IMR-90 (cell line): ENCODE measurements at regions of chr6 and their contacts with region 1.

Region 1: DNA sequence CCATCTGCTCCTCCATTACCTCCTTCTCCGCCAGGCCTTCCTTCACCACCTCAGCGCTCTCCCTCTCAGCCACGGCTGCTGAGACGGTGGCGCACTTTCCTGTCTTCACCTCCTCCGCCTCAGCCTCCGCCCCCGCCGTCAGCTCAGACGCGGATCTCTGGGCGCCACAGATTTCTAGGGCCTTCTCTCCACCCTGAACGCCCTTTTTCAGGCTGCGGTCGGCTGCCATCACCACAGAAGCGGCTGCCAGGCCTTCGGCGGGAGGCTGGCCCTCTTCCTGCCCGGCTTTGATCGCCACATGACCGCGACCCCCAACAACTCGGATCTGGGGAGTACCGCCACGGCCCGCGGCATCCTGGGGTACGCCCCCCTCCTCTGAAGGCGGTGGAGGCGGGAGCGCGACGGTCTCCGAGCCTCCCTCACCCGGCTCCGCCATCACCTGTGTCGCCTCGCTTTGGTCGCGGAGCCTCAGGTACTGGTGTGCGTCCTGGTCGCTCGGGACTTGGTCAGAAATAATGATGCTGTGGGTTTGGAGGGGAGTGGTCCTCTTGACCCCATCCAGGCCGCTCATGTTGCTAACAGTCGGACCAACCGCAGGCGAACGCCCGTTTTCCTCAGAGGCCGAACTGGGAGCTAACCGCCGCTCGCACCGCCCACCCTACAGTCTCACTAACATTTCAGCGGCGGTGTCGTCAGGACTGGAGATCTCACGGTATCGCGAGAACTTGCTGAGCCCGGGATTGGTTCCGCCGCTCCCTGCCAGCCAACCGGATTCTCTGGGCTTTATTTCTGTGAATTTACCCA is at the start of gene TSPYL1:
- DNase-seq: peak; percentile 97
- ATAC-seq: peak; percentile 96
- H3K4me3 ChIP-seq: peak within 1 kb of the TSS; percentile 87
- H3K27ac ChIP-seq: peak within 1 kb of the TSS; percentile 93
- H3K4me1 ChIP-seq: peaks cover 6% of the 10 kb centered on the region
- H3K27me3 ChIP-seq: no peaks in the 10 kb centered on the region
- CTCF ChIP-seq: 0 out of 2 replicates have a peak, but pooled peaks have one; percentile 13
- POLR2A ChIP-seq: peak; percentile 94
- RAD21 ChIP-seq: no peak
- total RNA-seq, gene TSPYL1: 111 and 121 TPM in 2 replicates

Region 2: DNA sequence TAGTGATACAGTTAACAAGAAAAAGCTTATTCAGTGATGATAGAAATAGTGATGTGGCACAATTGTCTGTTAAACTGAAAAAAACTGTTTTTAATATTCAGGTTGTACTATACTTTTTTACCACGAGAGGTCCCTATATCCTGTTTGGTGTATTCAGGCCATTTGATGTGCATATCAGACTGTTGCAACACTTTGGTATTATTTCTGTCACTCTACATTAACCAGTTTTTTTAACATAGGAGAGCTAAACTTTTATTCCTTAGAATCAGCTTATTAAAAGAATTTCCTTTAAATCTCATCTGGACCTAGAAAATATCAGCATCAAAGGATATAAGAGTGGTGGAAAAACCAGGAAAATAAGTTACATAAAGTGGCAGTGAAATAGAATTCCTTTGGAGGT is 62.4 kb before region 1 on chr6:
- CTCF ChIA-PET with region 1: no interaction called
- POLR2A ChIA-PET with region 1: no interaction called
- dilution Hi-C with region 1: no loop called
- in situ Hi-C with region 1: no loop called
- intact Hi-C with region 1: no loop called
- DNase-seq: peak; percentile 52
- ATAC-seq: peak; percentile 67
- H3K4me3 ChIP-seq: no peak overlapping the region
- H3K27ac ChIP-seq: no peak overlapping the region
- H3K4me1 ChIP-seq: peaks cover 6% of the 10 kb centered on the region
- H3K27me3 ChIP-seq: no peaks in the 10 kb centered on the region
- CTCF ChIP-seq: peak; percentile 59
- POLR2A ChIP-seq: no peak
- RAD21 ChIP-seq: peak; percentile 54

Region 3: DNA sequence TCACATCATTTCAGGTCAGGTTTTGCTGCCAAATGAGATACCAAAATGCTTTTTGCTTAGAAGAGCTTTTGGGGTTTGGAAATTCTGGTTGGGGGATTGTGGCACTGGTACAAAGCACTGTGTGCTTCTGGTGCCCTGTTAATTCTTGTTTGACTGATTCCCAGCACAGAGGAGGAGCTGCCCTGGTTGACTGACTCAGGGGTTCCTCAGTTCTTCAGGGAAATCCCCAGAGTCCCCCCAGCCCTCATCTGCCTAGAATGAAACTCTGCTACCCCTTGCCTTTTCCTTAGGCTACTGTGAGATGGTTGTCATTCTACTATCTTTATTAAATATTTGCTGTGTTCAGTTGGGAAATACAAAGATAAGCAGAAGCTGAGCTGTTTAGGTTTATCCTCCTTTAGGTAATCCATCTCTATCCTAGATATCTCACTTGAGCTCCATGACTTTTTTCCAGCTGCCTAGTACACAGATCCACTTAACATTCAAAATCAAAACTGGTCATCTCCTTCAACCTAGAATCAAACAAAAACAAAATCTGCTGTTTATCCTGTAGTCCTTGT is 25.2 kb after region 1 on chr6:
- CTCF ChIA-PET with region 1: no interaction called
- POLR2A ChIA-PET with region 1: no interaction called
- dilution Hi-C with region 1: no loop called
- in situ Hi-C with region 1: no loop called
- intact Hi-C with region 1: no loop called
- DNase-seq: no peak
- ATAC-seq: no peak; the same call in 1 of the 2 replicates
- H3K4me3 ChIP-seq: no peak overlapping the region
- H3K27ac ChIP-seq: no peak overlapping the region
- H3K4me1 ChIP-seq: no peaks in the 10 kb centered on the region
- H3K27me3 ChIP-seq: no peaks in the 10 kb centered on the region
- CTCF ChIP-seq: no peak
- POLR2A ChIP-seq: no peak
- RAD21 ChIP-seq: no peak

Region 4: DNA sequence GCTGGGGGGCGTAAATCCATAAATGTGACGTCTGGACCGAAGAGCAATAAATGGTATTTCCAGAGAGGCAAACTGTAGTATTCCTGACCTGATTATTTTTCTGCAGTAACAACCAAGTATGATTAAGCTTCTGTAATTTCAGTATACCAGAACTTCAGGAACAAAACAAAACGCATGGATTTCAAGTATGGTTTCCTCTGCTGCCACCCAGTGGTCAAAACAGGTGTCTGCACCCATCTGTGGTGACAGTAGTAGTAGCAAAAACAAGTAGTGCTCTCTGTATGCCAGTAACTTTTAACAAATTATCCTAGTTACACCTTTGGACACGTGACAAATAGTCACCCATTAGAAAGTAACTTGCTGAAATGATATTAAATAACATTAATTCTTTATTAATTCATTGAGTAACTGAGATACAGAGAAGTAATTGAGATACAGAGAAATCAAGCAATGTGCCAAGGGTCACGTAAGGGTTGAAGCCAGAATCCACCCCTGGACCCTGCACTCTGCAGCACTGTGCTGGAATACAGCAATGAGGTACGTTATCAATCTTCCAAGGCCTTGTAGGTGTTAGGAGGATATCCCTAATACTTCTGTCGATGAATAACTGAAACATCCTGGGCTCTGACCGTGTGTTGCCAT is 282.0 kb after region 1 on chr6:
- CTCF ChIA-PET with region 1: interaction called, 9 read pairs
- POLR2A ChIA-PET with region 1: no interaction called
- dilution Hi-C with region 1: no loop called
- in situ Hi-C with region 1: no loop called
- intact Hi-C with region 1: loop called (anchors 2 kb)
- DNase-seq: peak; percentile 75
- ATAC-seq: peak; percentile 72
- H3K4me3 ChIP-seq: no peak overlapping the region
- H3K27ac ChIP-seq: no peak overlapping the region
- H3K4me1 ChIP-seq: peaks cover 10% of the 10 kb centered on the region
- H3K27me3 ChIP-seq: no peaks in the 10 kb centered on the region
- CTCF ChIP-seq: peak; percentile 89
- POLR2A ChIP-seq: no peak
- RAD21 ChIP-seq: peak; percentile 88

Region 5: GRCh38 chr6:116570856-116571682 is 291.6 kb after region 1 on chr6 and contains the start of gene RWDD1:
- CTCF ChIA-PET with region 1: interaction called, 7 read pairs
- POLR2A ChIA-PET with region 1: no interaction called
- dilution Hi-C with region 1: no loop called
- in situ Hi-C with region 1: no loop called
- intact Hi-C with region 1: loop called (anchors 2 kb)
- DNase-seq: peak; percentile 100
- ATAC-seq: peak; percentile 97
- H3K4me3 ChIP-seq: peak within 1 kb of the TSS; percentile 81
- H3K27ac ChIP-seq: peak within 1 kb of the TSS; percentile 88
- H3K4me1 ChIP-seq: no peaks in the 10 kb centered on the region
- H3K27me3 ChIP-seq: no peaks in the 10 kb centered on the region
- CTCF ChIP-seq: no peak
- POLR2A ChIP-seq: peak; percentile 84
- RAD21 ChIP-seq: no peak
- total RNA-seq, gene RWDD1: 35.8 and 92.8 TPM in 2 replicates